Activated CD8-positive, alpha-beta T cell treated with anti-CD3 and anti-CD28 coated beads, Interleukin-2, amount 10 ng/mL, durations not matched to agents 7 days and 5 days (primary cell): ENCODE measurements at regions of chr18 and their contacts with region 1.

Region 1: GRCh38 chr18:3245853-3246634 is 1.6 kb upstream of the MYL12A start:
- DNase-seq: peak; percentile 89
- ATAC-seq: peak; percentile 52
- H3K4me3 Mint-ChIP-seq: peak overlapping the region; percentile 82
- H3K27ac Mint-ChIP-seq: peak overlapping the region; percentile 100
- H3K4me1 Mint-ChIP-seq: peaks cover 23% of the 10 kb centered on the region
- H3K27me3 Mint-ChIP-seq: no peaks in the 10 kb centered on the region

Region 2: GRCh38 chr18:2971741-2972552 is 274.1 kb before region 1 on chr18:
- CTCF ChIA-PET with region 1: interaction called, 5 read pairs
- POLR2A ChIA-PET with region 1: interaction called, 12 read pairs
- DNase-seq: peak; percentile 86
- ATAC-seq: peak; percentile 75
- H3K4me3 Mint-ChIP-seq: peak overlapping the region; percentile 76
- H3K27ac Mint-ChIP-seq: peak overlapping the region; percentile 96
- H3K4me1 Mint-ChIP-seq: peaks cover 91% of the 10 kb centered on the region
- H3K27me3 Mint-ChIP-seq: no peaks in the 10 kb centered on the region

Region 3: DNA sequence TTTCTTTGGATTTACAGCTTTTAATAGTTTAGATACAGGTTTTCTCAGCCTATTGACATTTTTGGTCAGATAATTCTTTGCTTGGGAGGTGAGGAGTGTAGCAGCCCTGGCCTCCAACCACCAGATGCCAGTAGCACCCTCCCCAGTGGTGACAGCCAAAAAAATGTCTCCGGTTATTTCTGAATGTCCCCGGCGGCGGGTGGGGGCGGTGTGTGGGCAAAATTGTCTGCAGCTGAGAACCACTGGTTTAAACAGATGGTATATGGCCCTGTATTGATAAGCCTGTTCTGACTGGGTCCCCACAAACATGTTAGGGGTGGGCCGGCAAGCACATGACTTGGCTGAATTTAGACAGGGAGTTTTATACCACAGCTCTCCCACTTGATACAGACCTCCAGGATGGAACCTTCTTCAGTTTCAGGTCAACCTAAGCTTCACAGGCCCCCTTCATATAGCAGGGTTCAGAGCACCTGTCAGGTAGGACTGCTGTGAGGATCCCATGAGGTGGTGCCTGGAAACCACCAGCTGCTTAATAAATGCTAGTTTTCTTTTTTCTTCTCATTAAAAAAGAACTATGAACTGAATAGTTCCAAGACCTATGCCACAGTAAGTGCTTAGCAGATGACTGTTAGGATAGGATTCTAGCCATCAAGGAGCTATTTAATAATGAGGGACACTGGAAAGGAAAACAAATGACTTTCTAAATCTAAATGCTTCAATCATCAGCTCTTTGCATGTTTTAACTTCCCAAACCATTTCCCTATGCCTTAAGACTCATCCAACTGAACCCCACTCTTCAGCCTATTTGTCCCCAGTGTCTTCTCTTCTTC is 251.2 kb before region 1 on chr18:
- CTCF ChIA-PET with region 1: interaction called, 92 read pairs
- POLR2A ChIA-PET with region 1: interaction called, 24 read pairs
- DNase-seq: peak; percentile 79
- ATAC-seq: peak; percentile 77
- H3K4me3 Mint-ChIP-seq: peak overlapping the region; percentile 46
- H3K27ac Mint-ChIP-seq: peak overlapping the region; percentile 57
- H3K4me1 Mint-ChIP-seq: peaks cover 77% of the 10 kb centered on the region
- H3K27me3 Mint-ChIP-seq: no peaks in the 10 kb centered on the region

Region 4: GRCh38 chr18:3186678-3187658 is 59.1 kb before region 1 on chr18:
- CTCF ChIA-PET with region 1: interaction called, 15 read pairs
- POLR2A ChIA-PET with region 1: no interaction called
- DNase-seq: no peak
- ATAC-seq: no peak
- H3K4me3 Mint-ChIP-seq: no peak overlapping the region
- H3K27ac Mint-ChIP-seq: no peak overlapping the region
- H3K4me1 Mint-ChIP-seq: no peaks in the 10 kb centered on the region
- H3K27me3 Mint-ChIP-seq: no peaks in the 10 kb centered on the region

Region 5: DNA sequence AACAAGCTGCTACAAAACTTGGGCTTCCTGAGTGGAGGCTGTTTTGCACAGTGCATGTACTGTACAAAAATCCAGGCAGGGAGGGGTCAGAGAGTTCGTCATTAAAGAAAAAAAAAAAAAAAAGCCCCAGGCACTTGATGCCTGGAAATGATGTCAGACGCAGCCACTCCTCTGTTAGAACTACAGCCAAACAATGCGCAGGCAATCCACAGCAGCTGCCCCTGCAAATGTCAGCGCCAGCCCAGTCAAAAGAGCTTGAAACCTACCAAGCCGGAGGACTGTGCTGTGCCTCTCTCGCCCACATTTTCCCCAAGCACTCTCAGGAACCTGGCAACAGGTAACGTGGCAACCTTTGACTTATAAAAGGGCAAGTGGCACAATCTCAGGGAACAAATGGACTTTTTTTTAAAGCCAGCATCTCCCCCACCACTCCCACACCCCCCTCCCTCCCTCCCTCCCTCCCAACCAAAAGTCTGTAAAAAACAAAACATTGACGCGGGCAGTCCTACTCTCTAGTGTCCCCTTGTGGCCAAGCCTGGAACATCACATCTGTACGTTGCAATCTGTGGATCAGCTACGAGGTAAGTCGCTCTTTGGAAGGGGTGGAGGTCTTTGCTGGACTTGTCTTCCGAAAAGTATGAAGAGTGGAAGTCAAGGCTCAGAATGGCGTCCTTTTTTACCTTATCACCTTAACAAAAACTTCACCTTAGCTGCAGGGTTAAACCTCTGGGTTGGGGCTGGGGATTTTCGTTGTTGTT is 348.0 kb after region 1 on chr18:
- CTCF ChIA-PET with region 1: no interaction called
- POLR2A ChIA-PET with region 1: interaction called, 15 read pairs
- DNase-seq: peak; percentile 92
- ATAC-seq: peak; percentile 92
- H3K4me3 Mint-ChIP-seq: peak overlapping the region; percentile 93
- H3K27ac Mint-ChIP-seq: peak overlapping the region; percentile 98
- H3K4me1 Mint-ChIP-seq: peaks cover 54% of the 10 kb centered on the region
- H3K27me3 Mint-ChIP-seq: no peaks in the 10 kb centered on the region